ENCODE measurements at regions of chr22 and their contacts with region 1.

Region 1: DNA sequence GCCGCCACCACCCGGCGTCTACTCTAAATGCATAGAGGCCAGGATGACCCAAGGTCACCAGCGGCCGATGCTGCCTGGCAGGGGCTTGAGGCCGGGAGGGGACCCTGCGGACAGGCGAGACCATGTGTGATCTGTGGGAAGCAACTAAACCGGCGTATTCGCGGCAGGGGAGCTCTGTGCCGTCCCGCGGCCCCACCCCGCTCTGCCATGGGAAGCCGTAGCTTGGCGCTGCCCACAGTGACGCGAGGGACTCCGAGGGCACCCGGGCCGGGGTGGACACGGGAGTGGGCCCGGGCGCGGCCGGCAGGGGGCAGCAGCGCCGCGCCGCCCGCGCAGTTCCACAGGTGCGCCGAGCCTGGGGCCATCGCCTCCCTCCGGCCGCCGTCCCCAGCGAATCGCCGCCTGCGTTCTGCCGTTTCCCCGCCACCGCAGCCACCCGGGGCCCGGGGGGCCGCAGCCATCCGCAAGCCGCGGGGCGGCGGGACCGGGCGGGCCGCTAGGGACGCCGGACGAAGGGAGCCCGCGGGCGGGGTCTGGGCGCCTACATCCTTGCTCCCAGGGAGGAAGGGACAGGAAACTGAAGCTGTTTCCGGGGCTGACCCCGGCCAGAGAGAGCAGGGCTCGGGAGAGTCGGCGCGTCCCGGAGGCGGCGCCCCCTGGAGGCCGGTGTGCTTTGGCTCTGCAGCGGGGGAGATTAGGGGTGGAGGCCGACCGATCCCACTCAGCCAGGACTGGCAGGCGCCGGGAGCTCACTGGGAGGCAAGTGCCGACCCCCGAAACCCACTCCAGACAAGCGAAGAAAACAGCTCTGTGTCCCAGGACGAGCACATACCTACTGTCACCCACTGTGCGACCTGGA is 12.5 kb upstream of the HDHD5 start:
- DNase-seq: peak; percentile 93 to 96
- ATAC-seq: peak; percentile 90 to 97 (median 92)
- H3K4me3 ChIP-seq: peak overlapping the region; percentile 71
- H3K27ac ChIP-seq: peak overlapping the region; percentile 92
- H3K4me1 ChIP-seq: peaks cover 17% of the 10 kb centered on the region
- H3K27me3 ChIP-seq: no peaks in the 10 kb centered on the region
- CTCF ChIP-seq: peak; percentile 79

Region 2: GRCh38 chr22:17258015-17258787 is 86.7 kb after region 1 on chr22:
- intact Hi-C with region 1: loop called in 1 of 2 experiments (anchors 5 kb)
- DNase-seq: peak; percentile 59 to 88
- ATAC-seq: peak; percentile 89 to 96 (median 94)
- H3K4me3 ChIP-seq: peak overlapping the region; percentile 50
- H3K27ac ChIP-seq: peak overlapping the region; percentile 97
- H3K4me1 ChIP-seq: peaks cover 32% of the 10 kb centered on the region
- H3K27me3 ChIP-seq: no peaks in the 10 kb centered on the region
- CTCF ChIP-seq: no peak

Region 3: GRCh38 chr22:17319546-17319945 is 148.0 kb after region 1 on chr22:
- intact Hi-C with region 1: no loop called
- DNase-seq: no peak
- ATAC-seq: no peak
- H3K4me3 ChIP-seq: no peak overlapping the region
- H3K27ac ChIP-seq: no peak overlapping the region
- H3K4me1 ChIP-seq: peaks cover 4% of the 10 kb centered on the region
- H3K27me3 ChIP-seq: no peaks in the 10 kb centered on the region
- CTCF ChIP-seq: no peak

Measured in psoas muscle (tissue), 8 donors.